ENCODE measurements at regions of chr3 and their contacts with region 1.

Region 1: DNA sequence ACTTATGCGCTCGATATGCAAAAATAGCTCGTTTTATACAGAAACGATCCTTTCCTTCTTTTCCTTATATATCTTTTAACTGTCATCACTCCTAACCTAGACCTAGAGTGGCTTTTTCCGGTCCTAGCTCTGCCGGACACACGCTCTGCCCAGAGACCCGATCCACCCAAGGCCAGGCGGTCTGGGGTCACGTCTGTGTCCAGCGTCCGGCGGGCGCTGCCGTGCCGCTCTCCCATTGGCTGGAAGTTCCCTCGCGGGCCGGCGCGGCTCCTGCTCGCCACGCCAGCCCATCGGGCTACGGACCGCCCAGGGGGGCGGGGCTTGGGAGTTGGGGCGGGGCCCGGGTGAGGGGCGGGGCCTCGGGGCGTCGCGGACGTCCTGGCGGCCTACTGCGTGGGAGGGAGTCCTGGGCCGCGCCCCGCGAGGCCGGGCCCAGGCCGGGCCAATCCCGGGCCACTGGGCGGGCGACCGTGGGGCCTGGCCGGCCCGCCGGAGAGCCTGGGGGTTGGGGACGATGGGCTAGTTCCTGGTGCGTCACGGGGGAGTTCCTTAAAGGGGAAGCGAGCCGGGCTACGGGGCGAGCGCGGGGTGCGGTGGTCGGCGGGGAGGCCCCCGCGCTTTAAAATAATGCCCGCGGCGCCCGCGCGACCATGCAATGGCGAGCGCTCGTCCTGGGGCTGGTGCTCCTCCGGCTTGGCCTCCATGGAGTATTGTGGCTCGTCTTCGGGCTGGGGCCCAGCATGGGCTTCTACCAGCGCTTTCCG is at the start of gene EDEM1:
- DNase-seq: peak; percentile 93 to 97
- ATAC-seq: peak; percentile 96 to 99 (median 97)
- H3K4me3 ChIP-seq: peak within 1 kb of the TSS; percentile 51 to 98 (median 94)
- H3K27ac ChIP-seq: peak within 1 kb of the TSS; percentile 61 to 99 (median 95)
- H3K4me1 ChIP-seq: peaks cover 0 to 79% (median 40%) of the 10 kb centered on the region in 9 donors
- H3K27me3 ChIP-seq: no peaks in the 10 kb centered on the region
- CTCF ChIP-seq: no peak
- total RNA-seq, gene EDEM1: 6.7 to 19.0 (median 9.1) TPM

Region 2: DNA sequence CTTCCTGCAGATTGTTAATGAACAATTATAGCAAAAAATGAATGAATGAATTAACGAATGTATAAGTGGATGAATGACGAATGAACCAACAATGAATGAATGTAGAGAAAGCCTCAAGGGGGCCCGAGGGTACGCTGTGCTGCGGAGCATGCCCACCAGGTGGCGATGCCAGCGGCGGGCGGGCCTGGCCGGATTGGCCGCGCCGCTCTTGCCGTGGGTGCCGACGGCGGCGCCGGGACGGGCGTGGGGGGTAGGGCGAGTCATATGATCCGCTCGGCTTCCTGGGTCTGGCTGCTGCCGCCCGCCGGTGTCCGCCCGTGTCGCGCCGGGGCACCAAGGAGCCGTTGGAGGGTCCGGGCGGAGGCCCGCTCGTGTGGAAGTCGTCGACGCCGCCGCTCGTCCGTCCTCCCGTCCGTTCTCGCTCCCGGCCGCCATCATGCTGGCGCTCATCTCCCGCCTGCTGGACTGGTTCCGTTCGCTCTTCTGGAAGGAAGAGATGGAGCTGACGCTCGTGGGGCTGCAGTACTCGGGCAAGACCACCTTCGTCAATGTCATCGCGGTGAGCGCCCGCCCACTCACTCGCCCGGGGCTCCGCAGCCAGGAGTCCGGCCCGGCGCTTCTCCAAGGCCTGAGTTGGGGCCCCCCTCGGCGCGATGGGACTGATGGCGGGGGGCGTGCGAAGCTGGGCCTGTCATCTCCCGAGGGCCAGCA is 65.2 kb before region 1 on chr3 and contains the start of gene ARL8B:
- intact Hi-C with region 1: loop called in 9 of 10 experiments (anchors 1 to 10 kb)
- DNase-seq: peak; percentile 91 to 92
- ATAC-seq: peak; percentile 98 to 99 (median 99)
- H3K4me3 ChIP-seq: peak within 1 kb of the TSS; percentile 79 to 100 (median 98)
- H3K27ac ChIP-seq: peak within 1 kb of the TSS; percentile 57 to 97 (median 92)
- H3K4me1 ChIP-seq: peaks cover 0 to 49% (median 44%) of the 10 kb centered on the region in 9 donors
- H3K27me3 ChIP-seq: no peaks in the 10 kb centered on the region
- CTCF ChIP-seq: peak; percentile 94 to 99 (median 97)
- total RNA-seq, gene ARL8B: 56.1 to 74.1 (median 66.8) TPM

Region 3: GRCh38 chr3:5136211-5136918 is 51.0 kb before region 1 on chr3:
- intact Hi-C with region 1: loop called in 1 of 10 experiments (anchors 10 kb)
- DNase-seq: no peak
- ATAC-seq: peak in 3 of 8 donors; percentile 10 to 44 (median 38)
- H3K4me3 ChIP-seq: no peak overlapping the region
- H3K27ac ChIP-seq: peak overlapping the region in 1 of 10 donors; percentile 18
- H3K4me1 ChIP-seq: peaks cover 4 to 90% (median 67%) of the 10 kb centered on the region in 9 donors
- H3K27me3 ChIP-seq: no peaks in the 10 kb centered on the region
- CTCF ChIP-seq: peak in 7 of 9 donors; percentile 9 to 50 (median 35)

Measured in heart right ventricle (tissue), 16 donors.